Mammary epithelial cell (primary cell): ENCODE measurements at regions of chr17 and their contacts with region 1.

Region 1: DNA sequence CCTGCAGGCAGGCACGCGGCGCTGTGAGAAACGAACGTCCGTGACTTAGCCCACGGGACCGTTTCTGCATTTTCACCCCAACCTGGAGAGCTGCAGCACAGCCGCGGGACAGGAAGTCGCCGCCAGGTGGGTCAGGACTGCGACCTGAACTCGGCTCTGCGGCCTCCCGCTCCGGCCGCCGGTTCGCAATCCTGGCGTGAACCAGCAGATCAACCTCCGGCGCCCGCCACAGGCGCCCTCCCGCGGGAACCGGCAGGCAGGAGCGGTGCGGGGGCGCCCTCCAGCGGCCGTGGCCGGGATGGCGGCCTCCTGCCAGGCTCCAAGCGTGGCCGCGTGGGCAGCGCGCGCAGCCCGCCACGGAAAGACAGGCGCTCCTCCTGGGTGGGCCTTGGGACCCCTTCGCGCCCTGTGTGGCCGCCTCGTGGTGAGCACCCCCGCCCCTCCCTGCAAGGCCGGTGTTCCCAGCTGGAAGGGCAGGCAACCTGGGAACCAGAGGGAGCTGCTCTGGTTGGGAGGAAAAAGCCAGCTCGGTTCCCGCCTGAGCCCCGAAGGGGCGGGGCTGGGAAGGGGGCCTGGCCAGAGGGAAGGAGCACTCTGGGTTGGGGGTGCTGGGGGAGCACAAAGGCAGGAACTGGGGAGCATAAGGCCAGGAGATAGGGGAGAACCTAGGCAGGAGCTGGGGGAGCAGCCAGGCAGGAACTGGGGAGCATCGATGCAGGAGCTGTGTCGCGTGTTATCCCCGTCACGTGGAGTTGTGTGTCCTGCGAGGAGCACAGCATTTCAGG is 28.2 kb downstream of the ACTG1 start:
- DNase-seq: peak; percentile 69
- H3K4me3 ChIP-seq: peak overlapping the region in 2 of 3 experiments; percentile 42 to 55
- H3K27ac ChIP-seq: no peak overlapping the region
- H3K4me1 ChIP-seq: peaks cover 27% of the 10 kb centered on the region
- H3K27me3 ChIP-seq: peaks cover 7% of the 10 kb centered on the region
- CTCF ChIP-seq: peak; percentile 59 to 81

Region 2: DNA sequence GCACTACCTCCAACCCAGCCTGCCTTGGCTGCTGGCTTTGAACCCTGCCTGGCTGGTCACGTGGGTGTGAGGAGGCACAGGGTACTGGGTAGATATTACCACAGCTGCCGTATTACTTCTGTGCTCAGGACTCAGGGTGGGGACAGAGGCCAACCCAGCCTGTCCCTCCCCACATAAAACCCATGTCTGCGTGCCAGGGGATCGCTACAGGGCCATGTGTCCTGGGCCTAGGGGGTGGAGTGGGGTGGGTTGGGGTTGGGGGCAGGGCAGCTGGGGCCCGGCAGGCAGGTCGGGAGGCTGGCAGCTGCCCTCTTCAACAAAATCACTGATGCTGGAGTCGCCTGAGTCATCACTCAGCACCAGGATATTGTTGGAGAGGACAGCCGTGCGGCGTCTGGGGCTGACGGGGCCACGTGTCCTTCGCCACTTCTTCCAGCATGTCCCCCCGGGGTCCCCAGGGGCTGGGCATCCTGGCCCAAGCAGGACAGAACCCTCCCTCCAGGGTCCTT is 358.8 kb before region 1 on chr17:
- CTCF ChIA-PET with region 1: no interaction called
- dilution Hi-C with region 1: no loop called
- in situ Hi-C with region 1: no loop called
- intact Hi-C with region 1: loop called (anchors 5 kb)
- DNase-seq: no peak
- H3K4me3 ChIP-seq: no peak overlapping the region
- H3K27ac ChIP-seq: no peak overlapping the region
- H3K4me1 ChIP-seq: no peaks in the 10 kb centered on the region
- H3K27me3 ChIP-seq: peaks cover 3% of the 10 kb centered on the region
- CTCF ChIP-seq: no peak

Region 3: GRCh38 chr17:81142301-81143199 is 341.8 kb before region 1 on chr17:
- CTCF ChIA-PET with region 1: no interaction called
- dilution Hi-C with region 1: no loop called
- in situ Hi-C with region 1: loop called in 1 of 2 experiments (anchors 5 kb)
- intact Hi-C with region 1: loop called (anchors 2 kb)
- DNase-seq: peak; percentile 60
- H3K4me3 ChIP-seq: no peak overlapping the region
- H3K27ac ChIP-seq: no peak overlapping the region
- H3K4me1 ChIP-seq: peaks cover 5% of the 10 kb centered on the region
- H3K27me3 ChIP-seq: no peaks in the 10 kb centered on the region
- CTCF ChIP-seq: peak; percentile 59 to 74

Region 4: DNA sequence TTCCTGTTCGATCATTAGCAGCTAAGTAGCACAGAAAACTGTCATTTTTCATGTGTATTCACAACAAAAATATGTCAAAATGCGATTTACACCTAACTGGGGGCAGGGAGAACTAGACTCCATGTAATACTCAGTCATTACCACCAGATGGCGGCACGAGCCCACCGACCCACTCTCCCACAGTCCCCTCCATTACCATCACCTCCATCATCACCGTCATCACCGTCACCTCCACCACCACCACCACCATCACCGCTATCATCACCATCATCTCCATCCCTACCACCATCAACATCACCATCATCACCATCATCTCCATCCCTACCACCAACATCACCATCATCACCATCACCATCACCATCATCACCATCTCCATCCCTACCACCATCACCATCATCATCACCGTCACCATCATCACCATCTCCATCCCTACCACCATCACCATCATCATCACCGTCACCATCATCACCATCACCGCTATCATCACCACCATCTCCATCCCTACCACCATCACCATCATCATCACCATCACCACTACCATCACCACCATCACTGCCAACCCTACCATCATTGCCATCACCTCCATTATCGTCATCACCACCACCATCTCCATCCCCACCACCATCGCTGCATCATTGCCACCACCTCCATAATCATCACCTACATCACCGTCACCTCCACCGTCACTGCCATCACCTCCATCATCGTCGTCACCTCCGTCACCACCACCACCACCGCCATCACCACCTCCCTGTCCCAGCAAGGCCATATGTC is 230.8 kb before region 1 on chr17:
- CTCF ChIA-PET with region 1: no interaction called
- dilution Hi-C with region 1: no loop called
- in situ Hi-C with region 1: no loop called
- intact Hi-C with region 1: loop called (anchors 1 kb)
- DNase-seq: no peak
- H3K4me3 ChIP-seq: no peak overlapping the region
- H3K27ac ChIP-seq: no peak overlapping the region
- H3K4me1 ChIP-seq: no peaks in the 10 kb centered on the region
- H3K27me3 ChIP-seq: no peaks in the 10 kb centered on the region
- CTCF ChIP-seq: peak; percentile 61 to 66

Region 5: GRCh38 chr17:81294856-81295680 is 189.3 kb before region 1 on chr17 and contains the start of gene SLC38A10:
- CTCF ChIA-PET with region 1: interaction called, 7 read pairs
- dilution Hi-C with region 1: no loop called
- in situ Hi-C with region 1: loop called (anchors 25 kb)
- intact Hi-C with region 1: loop called (anchors 1 kb)
- DNase-seq: peak; percentile 83
- H3K4me3 ChIP-seq: peak within 1 kb of the TSS; percentile 71 to 87 (median 71)
- H3K27ac ChIP-seq: peak within 1 kb of the TSS; percentile 45
- H3K4me1 ChIP-seq: peaks cover 11% of the 10 kb centered on the region
- H3K27me3 ChIP-seq: no peaks in the 10 kb centered on the region
- CTCF ChIP-seq: peak in 1 of 2 donors; percentile 5
- total RNA-seq, gene SLC38A10: 36.5 to 71.7 TPM

Region 6: GRCh38 chr17:81371910-81372760 is 112.3 kb before region 1 on chr17:
- CTCF ChIA-PET with region 1: no interaction called
- dilution Hi-C with region 1: no loop called
- in situ Hi-C with region 1: no loop called
- intact Hi-C with region 1: loop called (anchors 1 kb)
- DNase-seq: no peak
- H3K4me3 ChIP-seq: no peak overlapping the region
- H3K27ac ChIP-seq: no peak overlapping the region
- H3K4me1 ChIP-seq: no peaks in the 10 kb centered on the region
- H3K27me3 ChIP-seq: peaks cover 2% of the 10 kb centered on the region
- CTCF ChIP-seq: peak; percentile 31 to 47